ENCODE measurements at regions of chr15 and their contacts with region 1.

Region 1: DNA sequence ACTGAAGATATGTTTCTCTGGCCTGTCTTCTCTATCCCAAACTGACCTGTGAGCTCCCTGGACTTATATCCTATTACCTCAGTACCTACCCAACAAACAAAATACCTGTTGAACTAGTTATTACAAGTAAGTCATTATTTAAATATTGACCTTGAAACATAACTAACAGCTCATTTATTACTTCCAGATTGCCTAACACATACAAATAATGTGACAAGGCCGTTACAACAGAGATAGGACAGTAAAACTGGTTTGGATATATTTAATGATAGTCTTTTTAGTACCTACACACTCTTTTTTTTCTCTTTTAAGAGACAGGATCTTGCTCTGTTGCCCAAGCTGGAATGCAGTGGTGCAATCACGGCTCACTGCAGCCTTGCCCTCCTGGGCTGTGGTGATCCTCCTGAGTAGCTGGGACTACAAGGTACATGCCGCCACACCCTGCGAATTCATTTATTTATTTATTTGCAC is 145.0 kb downstream of the ADAM10 start:
- DNase-seq: no peak

Region 2: DNA sequence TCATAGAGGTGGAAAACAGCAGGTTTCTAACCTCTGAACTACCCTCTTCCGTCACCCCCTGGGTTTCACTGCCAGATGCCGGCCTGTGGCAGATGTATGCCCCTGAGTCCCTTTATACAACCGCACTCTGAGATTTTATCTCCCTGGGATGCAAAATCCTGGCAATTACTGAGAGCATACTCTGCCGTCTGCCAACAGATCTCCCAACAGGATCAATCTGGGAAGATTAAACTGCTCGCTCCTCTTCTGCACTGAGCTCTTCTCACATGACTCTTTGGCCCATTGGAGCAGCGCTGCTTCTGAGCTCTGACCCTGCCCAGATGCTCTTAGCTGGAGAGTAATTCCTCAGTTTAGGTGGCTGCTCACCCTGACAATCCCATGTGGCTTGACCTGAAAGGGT is 39.5 kb before region 1 on chr15:
- intact Hi-C with region 1: loop called in 1 of 2 experiments (anchors 2 kb)
- DNase-seq: no peak

Region 3: DNA sequence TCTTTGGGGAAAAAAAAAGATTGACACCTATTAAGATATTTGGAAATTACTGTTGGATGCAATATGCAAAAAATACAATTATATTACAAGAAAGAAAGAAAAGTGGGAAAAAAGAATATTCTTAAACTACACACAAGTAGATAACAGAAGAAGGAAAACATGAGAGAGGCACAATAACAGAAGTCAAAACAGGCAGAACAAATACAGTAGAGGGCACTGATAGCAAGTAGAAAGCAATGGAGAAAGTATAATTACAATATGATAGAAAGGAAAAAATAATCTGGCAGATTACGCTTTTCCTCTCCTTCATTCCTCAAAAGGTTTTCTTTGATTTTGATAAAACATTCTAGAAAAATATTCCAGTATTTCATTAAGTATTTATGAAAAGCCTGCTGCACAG is 72.9 kb after region 1 on chr15:
- intact Hi-C with region 1: no loop called
- DNase-seq: no peak

Measured in posterior vena cava (tissue), 2 donors.